PC-9 (cell line): ENCODE measurements at regions of chrX and their contacts with region 1.

Region 1: DNA sequence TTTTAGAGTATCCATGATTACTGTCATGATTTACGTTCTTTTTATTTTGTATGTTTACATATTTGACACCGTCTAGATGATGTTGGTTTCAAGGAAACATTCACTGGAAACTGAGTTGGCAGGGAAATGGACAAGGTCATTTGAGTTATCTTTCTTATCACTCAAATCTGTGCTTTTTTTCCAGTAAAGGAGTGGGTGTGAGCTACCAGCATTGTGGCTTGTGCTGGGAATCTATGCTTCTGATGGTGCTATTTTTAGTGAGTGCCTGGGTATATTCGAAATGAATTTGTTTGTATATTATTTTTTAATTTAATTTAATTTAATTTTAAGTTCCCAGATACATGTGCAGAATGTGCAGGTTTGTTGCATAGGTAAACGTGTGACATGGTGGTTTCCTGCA is 73.9 kb upstream of the NLGN4X start:
- DNase-seq: no peak
- H3K4me3 ChIP-seq: no peak overlapping the region
- H3K27ac ChIP-seq: no peak overlapping the region
- H3K4me1 ChIP-seq: no peaks in the 10 kb centered on the region
- H3K27me3 ChIP-seq: no peaks in the 10 kb centered on the region
- CTCF ChIP-seq: no peak

Region 2: GRCh38 chrX:4682616-4683015 is 1620.0 kb before region 1 on chrX:
- CTCF ChIA-PET with region 1: no interaction called
- POLR2A ChIA-PET with region 1: interaction called, 13 read pairs
- intact Hi-C with region 1: no loop called
- DNase-seq: no peak
- H3K4me3 ChIP-seq: no peak overlapping the region
- H3K27ac ChIP-seq: no peak overlapping the region
- H3K4me1 ChIP-seq: no peaks in the 10 kb centered on the region
- H3K27me3 ChIP-seq: no peaks in the 10 kb centered on the region
- CTCF ChIP-seq: no peak

Region 3: GRCh38 chrX:6759655-6760375 is 457.2 kb after region 1 on chrX:
- CTCF ChIA-PET with region 1: no interaction called
- POLR2A ChIA-PET with region 1: no interaction called
- intact Hi-C with region 1: no loop called
- DNase-seq: no peak
- H3K4me3 ChIP-seq: no peak overlapping the region
- H3K27ac ChIP-seq: no peak overlapping the region
- H3K4me1 ChIP-seq: no peaks in the 10 kb centered on the region
- H3K27me3 ChIP-seq: no peaks in the 10 kb centered on the region
- CTCF ChIP-seq: no peak